ENCODE measurements at regions of chr17 and their contacts with region 1.

Region 1: DNA sequence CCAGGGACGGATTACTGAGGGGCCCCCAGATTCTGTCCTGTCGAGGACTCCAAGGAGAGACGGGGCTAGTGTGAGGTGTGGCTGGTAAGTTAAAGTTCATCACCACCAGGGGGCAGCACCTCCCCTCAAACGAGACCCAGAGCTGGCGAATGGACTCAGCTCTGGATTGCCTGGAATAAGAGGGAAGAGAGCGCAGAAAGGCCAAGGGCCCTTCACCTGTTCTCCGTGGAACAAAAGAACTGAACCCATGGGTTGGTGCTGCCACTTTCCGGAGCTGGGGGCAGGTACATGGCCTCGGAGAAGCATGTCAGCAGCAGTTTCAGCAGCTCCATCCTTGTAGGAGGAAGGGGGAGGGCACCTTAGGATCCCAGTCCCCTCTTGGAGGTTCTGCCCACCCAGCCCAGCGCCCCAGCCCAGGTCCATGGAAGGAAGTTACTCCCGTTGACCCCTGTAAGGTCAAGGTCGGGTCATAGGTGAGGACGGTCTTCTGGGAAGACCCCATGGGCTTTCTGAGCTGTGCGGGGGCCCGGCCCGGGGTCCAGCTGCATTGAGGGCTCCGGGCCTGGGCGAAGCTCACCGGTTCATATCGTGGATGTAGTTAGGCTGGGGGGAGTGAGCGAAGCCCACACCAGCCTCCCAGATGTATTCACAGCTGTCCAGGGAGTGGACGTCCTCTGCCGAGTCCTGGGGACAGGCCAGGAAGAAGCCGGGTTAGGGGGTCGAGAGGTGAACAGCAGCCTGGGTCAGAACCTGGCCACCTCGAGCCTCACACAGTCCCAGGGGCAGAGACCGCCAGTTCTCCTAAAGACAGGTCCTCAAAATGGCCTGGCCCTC is 10.7 kb downstream of the HID1 start:
- DNase-seq: peak; percentile 71
- ATAC-seq: peak; percentile 69
- H3K4me3 Mint-ChIP-seq: no peak overlapping the region
- H3K27ac Mint-ChIP-seq: no peak overlapping the region
- H3K4me1 Mint-ChIP-seq: peaks cover 9% of the 10 kb centered on the region
- H3K27me3 Mint-ChIP-seq: peaks cover 4% of the 10 kb centered on the region
- CTCF ChIP-seq: peak; percentile 58

Region 2: DNA sequence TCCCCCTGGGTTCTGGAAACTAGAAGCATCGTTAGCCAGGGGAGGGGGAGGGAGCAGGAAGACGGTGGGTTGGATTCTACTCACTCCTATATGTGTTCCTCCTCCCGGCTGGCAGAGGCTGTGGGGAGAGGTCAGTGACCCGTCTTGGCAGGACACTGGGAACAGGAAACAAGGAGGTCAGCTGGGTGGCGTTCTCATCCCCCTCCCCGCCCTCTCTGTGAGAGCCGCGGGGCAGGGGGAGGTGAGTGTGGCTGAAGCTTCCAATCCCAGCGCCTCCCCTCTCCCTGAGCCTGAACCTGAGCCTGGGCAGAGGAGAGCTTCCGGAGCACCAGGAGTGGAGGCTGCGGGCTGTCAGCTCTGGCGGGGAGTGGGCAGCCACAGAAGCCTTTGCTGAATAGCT is 517.5 kb before region 1 on chr17:
- CTCF ChIA-PET with region 1: no interaction called
- POLR2A ChIA-PET with region 1: no interaction called
- intact Hi-C with region 1: no loop called
- DNase-seq: no peak
- ATAC-seq: no peak
- H3K4me3 Mint-ChIP-seq: no peak overlapping the region
- H3K27ac Mint-ChIP-seq: no peak overlapping the region
- H3K4me1 Mint-ChIP-seq: peaks cover 23% of the 10 kb centered on the region
- H3K27me3 Mint-ChIP-seq: peaks cover 12% of the 10 kb centered on the region
- CTCF ChIP-seq: no peak

Region 3: DNA sequence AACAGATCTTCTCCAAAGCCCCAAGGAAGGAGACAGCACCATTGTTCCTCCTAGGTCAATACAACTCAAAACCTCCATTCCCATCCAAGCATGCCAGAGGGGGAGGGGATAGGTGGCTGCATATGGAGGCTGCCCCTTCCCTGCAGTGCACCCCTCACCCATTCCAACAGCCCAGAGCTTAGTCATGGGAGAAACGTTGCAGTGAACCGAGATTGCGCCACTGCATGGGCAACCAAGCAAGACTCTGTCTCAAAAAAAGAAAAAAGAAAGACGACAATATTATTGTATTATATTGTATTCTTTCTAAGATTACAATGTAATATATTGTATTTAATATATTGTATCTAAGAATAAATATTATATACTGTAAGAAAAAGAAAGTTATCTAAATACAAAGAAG is 302.0 kb before region 1 on chr17:
- CTCF ChIA-PET with region 1: interaction called, 13 read pairs
- POLR2A ChIA-PET with region 1: no interaction called
- intact Hi-C with region 1: loop called (anchors 5 kb)
- DNase-seq: no peak
- ATAC-seq: no peak
- H3K4me3 Mint-ChIP-seq: no peak overlapping the region
- H3K27ac Mint-ChIP-seq: no peak overlapping the region
- H3K4me1 Mint-ChIP-seq: peaks cover 4% of the 10 kb centered on the region
- H3K27me3 Mint-ChIP-seq: peaks cover 44% of the 10 kb centered on the region
- CTCF ChIP-seq: no peak

Region 4: GRCh38 chr17:74923533-74924249 is 38.2 kb before region 1 on chr17:
- CTCF ChIA-PET with region 1: interaction called, 6 read pairs
- POLR2A ChIA-PET with region 1: no interaction called
- intact Hi-C with region 1: loop called (anchors 1 kb)
- DNase-seq: peak; percentile 68
- ATAC-seq: peak; percentile 67
- H3K4me3 Mint-ChIP-seq: peak overlapping the region; percentile 63
- H3K27ac Mint-ChIP-seq: no peak overlapping the region
- H3K4me1 Mint-ChIP-seq: peaks cover 21% of the 10 kb centered on the region
- H3K27me3 Mint-ChIP-seq: peaks cover 57% of the 10 kb centered on the region
- CTCF ChIP-seq: no peak

Region 5: GRCh38 chr17:74941128-74942014 is 20.5 kb before region 1 on chr17:
- CTCF ChIA-PET with region 1: no interaction called
- POLR2A ChIA-PET with region 1: no interaction called
- intact Hi-C with region 1: no loop called
- DNase-seq: no peak
- ATAC-seq: no peak
- H3K4me3 Mint-ChIP-seq: no peak overlapping the region
- H3K27ac Mint-ChIP-seq: no peak overlapping the region
- H3K4me1 Mint-ChIP-seq: no peaks in the 10 kb centered on the region
- H3K27me3 Mint-ChIP-seq: peaks cover 54% of the 10 kb centered on the region
- CTCF ChIP-seq: no peak

Region 6: GRCh38 chr17:75034236-75034908 is 72.5 kb after region 1 on chr17:
- CTCF ChIA-PET with region 1: interaction called, 3 read pairs
- POLR2A ChIA-PET with region 1: interaction called, 4 read pairs
- intact Hi-C with region 1: loop called (anchors 1 kb)
- DNase-seq: peak; percentile 76
- ATAC-seq: peak; percentile 72
- H3K4me3 Mint-ChIP-seq: peak overlapping the region; percentile 91
- H3K27ac Mint-ChIP-seq: peak overlapping the region; percentile 89
- H3K4me1 Mint-ChIP-seq: peaks cover 34% of the 10 kb centered on the region
- H3K27me3 Mint-ChIP-seq: peaks cover 1% of the 10 kb centered on the region
- CTCF ChIP-seq: no peak

Region 7: GRCh38 chr17:75173526-75173925 is 211.7 kb after region 1 on chr17:
- CTCF ChIA-PET with region 1: interaction called, 20 read pairs
- POLR2A ChIA-PET with region 1: interaction called, 3 read pairs
- intact Hi-C with region 1: loop called (anchors 1 kb)
- DNase-seq: no peak
- ATAC-seq: no peak
- H3K4me3 Mint-ChIP-seq: no peak overlapping the region
- H3K27ac Mint-ChIP-seq: peak overlapping the region; percentile 46
- H3K4me1 Mint-ChIP-seq: peaks cover 16% of the 10 kb centered on the region
- H3K27me3 Mint-ChIP-seq: no peaks in the 10 kb centered on the region
- CTCF ChIP-seq: no peak

Region 8: DNA sequence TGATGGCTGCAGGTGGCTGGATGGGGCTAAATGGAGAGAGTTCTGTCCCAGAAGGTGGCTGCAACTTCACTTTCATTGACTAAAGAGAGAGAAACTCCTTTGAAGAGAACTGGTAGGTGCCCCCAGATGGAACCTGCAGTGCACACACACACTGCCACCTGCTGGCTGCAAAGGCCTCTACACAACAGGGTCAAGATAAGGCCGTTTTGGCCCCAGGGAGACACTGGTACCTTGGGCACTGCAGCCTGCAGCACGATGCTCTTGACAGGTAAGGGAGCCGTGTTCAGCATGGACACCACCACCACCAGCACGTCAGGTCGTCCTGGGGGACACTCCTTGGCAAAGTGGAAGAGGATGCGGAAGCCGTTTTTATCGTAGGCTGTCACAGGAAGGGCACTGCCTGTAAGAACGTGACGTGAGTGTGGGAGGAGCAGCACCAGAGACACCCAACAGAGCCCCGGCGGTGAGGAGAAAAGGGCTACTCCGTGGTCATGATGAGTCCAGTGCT is 276.9 kb after region 1 on chr17:
- CTCF ChIA-PET with region 1: interaction called, 16 read pairs
- POLR2A ChIA-PET with region 1: no interaction called
- intact Hi-C with region 1: no loop called
- DNase-seq: peak; percentile 53
- ATAC-seq: peak; percentile 72
- H3K4me3 Mint-ChIP-seq: peak overlapping the region; percentile 57
- H3K27ac Mint-ChIP-seq: peak overlapping the region; percentile 83
- H3K4me1 Mint-ChIP-seq: peaks cover 35% of the 10 kb centered on the region
- H3K27me3 Mint-ChIP-seq: no peaks in the 10 kb centered on the region
- CTCF ChIP-seq: no peak